HEK293T (cell line): ENCODE measurements at regions of chr22 and their contacts with region 1.

Region 1: DNA sequence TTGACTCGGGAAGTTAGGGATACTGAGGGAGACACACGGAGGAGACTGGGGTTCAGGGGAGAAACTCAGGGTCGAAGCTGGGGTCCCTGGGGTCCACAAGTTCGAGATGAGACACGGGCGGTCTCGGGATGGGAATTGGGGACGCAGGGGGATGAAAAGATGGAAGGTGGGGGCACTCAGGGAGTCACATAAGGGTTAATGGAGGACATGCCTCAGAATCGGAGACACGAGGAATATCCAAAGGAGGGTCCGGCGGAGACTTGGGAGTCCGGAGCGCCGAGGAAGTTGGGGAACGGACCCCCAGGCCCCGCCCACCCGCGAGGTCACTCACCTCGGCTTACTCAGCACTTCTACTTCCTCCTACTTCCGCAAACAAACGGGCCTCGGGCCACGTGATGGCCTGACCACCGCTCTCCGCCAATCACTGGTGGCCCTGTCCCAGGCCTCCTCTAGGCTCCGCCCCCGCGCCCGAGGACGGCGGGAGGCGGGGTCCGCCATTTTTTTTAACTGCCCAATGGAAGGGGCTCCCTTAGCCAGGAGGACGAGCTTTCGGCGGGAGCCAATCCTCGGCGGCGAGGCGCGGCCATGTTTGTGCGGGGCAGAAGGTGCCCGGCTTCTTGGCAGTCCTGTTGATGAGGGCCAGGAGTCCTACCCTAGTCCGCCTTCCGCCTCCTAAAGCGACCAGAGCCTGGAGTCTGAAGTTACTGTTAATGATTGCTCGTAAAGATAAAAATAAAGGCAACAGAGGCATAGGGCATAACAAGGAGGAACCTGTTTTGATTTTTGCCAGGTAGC is at the start of gene PLA2G6:
- DNase-seq: peak; percentile 100

Region 2: DNA sequence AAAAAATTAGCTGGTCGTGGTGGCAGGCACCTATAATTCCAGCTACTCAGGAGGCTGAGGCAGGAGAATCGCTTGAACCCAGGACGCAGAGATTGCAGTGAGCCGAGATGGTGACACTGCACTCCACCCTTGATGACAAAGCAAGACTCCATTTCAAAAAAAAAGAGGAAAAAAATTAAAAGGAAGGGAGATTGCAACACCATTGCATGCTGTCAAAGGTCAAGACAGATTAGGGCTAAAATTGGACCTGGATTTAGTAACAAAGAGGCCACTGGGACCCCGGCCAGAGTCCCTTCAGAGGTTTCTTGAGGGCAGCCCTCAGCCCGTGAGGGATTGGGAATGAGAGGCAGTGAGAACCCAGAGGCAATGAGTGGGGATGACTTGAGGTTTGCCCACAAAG is 11.9 kb after region 1 on chr22:
- CTCF ChIA-PET with region 1: no interaction called
- POLR2A ChIA-PET with region 1: interaction called, 13 read pairs
- DNase-seq: no peak

Region 3: DNA sequence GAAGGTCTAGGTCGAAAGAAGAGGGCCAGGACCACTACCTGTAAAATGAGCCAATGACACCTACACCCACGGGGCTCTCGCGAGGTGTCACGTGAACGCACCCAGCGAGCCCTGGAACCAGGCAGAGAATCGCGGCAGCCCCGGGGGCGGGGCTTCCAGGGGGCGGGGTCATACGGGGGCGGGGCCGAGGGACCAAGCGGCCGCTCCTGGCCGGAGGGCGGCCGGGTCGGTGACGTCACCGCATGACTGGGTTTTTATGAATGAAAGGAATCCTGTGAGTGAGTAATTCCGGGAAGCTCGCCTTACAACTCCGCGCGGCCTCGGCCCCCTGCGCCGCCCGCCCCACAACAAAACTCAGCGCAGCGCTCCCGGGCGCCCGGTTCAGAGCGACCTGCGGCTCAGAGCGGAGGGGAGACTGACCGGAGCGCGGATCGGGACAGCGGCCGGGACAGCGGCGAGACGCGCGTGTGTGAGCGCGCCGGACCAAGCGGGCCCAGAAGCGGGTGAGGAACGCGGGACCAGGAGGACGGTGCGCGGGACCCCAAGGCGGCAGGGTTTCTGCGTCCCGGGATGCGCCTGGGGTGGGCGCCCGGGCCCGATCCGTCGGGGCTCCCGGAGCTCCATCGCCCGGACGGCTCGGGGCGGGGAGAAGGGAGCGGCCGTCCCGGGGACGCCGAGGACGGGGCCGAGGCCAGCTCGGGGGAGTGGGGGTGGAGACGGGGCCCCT is 20.2 kb after region 1 on chr22 and contains the start of gene MAFF:
- CTCF ChIA-PET with region 1: no interaction called
- POLR2A ChIA-PET with region 1: interaction called, 13 read pairs
- DNase-seq: peak; percentile 100

Region 4: DNA sequence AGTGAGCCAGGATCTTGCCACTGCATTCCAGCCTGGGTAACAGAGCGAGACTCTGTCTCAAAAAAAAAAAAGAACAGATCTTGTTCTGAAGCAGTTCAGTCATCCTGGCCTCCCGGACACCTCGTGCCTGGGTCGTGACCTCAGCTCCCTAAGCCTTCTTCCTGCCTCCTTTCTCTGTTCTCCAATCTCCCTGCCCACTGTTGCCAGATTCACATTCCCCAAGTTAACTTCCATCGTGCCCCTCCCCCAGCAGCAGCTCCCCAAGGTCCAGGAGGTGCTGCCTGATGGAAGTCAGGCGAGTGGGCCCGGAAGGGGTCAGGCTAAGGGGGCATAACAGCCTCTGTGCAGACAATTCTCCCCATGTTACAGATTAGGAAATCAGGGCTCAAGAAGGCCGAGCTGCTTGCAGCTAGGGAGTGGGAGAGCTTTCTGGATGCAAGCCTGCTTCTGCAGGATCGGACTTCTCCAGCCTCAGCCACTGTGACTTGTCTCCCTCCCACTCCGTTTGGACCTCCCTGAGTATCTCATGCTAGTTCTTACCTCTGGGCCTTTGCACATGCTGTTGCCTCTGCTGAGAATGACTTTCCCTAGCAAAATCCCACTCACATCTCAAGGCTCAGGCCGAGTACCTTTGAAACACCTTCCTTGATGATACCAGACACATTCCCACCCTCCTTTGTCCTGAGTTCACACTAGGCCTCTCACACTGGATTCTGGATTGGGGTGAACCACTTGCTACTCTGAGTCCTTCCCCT is 105.4 kb after region 1 on chr22:
- CTCF ChIA-PET with region 1: no interaction called
- POLR2A ChIA-PET with region 1: no interaction called
- DNase-seq: no peak

Region 5: DNA sequence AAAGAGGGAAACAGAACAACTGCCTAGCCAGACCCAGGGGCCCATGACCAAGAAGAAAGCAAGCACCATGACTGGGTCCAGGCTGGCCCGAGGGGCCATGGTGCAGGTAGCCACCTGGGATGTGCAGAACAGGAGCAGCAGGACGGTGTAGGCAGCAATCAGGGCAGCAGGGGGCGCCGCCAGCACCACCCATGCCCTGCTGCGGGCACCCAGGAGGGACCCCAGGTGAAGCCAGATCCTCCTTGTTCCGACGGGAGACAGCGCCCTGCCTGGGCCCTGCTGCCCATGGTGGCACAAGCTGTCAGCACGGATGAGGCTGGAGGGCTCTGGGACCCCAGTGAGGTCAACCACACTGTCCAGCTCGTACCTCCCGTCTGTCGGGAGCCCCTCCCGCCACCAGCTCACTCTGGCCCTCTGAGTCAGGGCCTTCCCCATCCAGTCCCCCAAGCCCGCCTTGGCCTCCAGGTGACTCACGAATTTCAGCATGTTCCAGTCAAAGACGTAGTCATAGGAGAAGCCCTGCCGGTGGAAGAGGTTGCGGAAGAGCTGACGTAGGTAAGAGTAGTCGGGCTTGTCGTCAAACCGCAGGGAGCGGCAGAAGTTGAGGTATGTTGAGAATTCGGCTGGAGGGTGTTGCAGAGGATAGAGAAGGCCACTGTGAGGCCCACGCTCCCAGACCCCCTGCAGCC is 116.8 kb after region 1 on chr22:
- CTCF ChIA-PET with region 1: no interaction called
- POLR2A ChIA-PET with region 1: no interaction called
- DNase-seq: peak; percentile 73